ENCODE measurements at regions of chr1 and their contacts with region 1.

Region 1: GRCh38 chr1:4733446-4734177 is 79.2 kb downstream of the AJAP1 start:
- DNase-seq: no peak
- ATAC-seq: no peak
- H3K4me3 ChIP-seq: no peak overlapping the region
- H3K27ac ChIP-seq: no peak overlapping the region
- H3K4me1 ChIP-seq: no peaks in the 10 kb centered on the region
- H3K27me3 ChIP-seq: peaks cover 84% of the 10 kb centered on the region
- CTCF ChIP-seq: no peak

Region 2: DNA sequence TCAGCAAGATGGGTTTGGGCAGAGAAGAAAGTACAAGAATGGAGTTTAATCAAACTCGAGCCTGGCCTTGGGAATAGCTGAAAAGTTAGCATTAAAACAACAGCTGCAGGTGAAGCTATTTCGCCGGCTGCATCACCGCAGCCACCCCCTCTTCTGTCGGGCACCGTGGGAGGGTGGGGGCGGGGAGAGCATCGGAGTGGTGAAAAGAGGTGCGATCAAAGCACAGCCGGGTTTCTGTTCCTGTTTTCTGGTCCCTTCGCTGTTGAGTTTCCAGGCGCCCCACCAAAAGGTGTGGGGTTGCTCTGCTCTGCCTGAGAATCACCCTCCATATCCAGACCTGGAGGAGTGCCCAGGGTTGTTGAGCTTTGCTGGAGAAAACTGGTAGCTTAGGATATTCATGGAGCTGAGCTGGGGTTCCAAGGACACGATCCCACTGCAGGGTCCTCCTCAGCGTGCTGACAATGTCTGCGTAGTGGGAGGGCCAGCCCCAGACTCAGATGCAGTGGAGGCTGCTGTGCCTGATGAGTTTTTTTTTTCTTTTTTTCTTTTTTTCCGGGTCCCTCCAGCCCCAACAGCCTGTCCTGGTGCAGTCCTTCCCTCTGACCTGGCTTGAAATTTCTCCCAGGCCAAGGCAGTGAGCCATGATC is 706.0 kb before region 1 on chr1:
- CTCF ChIA-PET with region 1: no interaction called
- POLR2A ChIA-PET with region 1: no interaction called
- intact Hi-C with region 1: no loop called
- DNase-seq: no peak
- ATAC-seq: no peak
- H3K4me3 ChIP-seq: no peak overlapping the region
- H3K27ac ChIP-seq: no peak overlapping the region
- H3K4me1 ChIP-seq: no peaks in the 10 kb centered on the region
- H3K27me3 ChIP-seq: peaks cover 81% of the 10 kb centered on the region
- CTCF ChIP-seq: no peak

Region 3: DNA sequence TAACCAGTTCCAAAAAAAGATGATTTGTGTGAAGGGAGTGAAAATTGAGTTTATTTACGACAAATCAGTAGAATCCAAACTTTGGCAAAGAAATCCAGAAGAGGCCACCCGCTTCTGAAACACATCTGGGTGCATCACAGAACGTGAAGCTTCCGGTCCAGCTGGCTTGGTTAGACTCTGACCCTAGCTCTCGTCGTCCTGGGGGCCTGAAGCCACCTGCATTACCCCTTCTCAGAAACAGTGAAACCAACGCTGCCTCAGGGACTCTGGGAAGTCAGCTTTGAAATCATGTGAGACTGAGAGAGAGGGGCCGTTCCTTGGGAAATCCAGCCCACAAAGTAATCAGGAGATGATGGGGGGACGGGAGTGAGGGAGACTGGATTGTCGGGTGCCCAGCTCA is 57.3 kb before region 1 on chr1:
- CTCF ChIA-PET with region 1: no interaction called
- POLR2A ChIA-PET with region 1: no interaction called
- intact Hi-C with region 1: loop called (anchors 2 kb)
- DNase-seq: no peak
- ATAC-seq: no peak
- H3K4me3 ChIP-seq: no peak overlapping the region
- H3K27ac ChIP-seq: no peak overlapping the region
- H3K4me1 ChIP-seq: no peaks in the 10 kb centered on the region
- H3K27me3 ChIP-seq: peaks cover 32% of the 10 kb centered on the region
- CTCF ChIP-seq: no peak